Thyroid gland (tissue), 4 donors: ENCODE measurements at regions of chr3 and their contacts with region 1.

Region 1: DNA sequence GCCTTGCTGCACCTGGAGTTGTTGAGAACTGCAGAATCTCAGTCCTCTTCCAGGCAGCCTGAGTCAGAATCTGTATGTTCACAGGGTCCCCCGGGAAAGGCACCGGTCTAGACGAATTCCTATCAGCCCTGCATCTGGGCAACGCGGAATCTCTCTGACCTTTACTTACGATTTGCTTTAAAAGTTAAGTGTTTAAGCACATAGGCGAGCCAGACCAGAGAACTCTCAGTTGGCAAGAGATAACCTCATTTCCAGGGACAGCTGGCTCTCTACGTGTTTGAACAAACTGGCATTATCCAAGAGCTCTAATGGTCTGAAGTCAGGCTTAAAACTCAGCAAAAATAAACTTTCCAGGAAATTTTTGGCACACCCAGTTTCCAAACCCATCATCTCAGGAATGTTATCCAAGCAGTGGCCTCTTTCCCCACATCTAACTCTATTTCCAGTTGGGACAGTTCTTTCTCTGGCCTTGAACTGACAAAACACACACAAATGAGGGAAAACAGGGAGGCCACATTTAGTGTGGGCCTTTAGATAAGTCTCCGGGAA is 53.4 kb downstream of the HES1 start:
- DNase-seq: peak; percentile 56 to 61
- H3K4me3 ChIP-seq: no peak overlapping the region
- H3K27ac ChIP-seq: peak overlapping the region; percentile 68 to 74 (median 72)
- H3K4me1 ChIP-seq: peaks cover 35 to 69% of the 10 kb centered on the region in 2 donors
- H3K27me3 ChIP-seq: no peaks in the 10 kb centered on the region
- CTCF ChIP-seq: no peak
- POLR2A ChIP-seq: no peak

Region 2: GRCh38 chr3:194141415-194142155 is 47.7 kb before region 1 on chr3:
- intact Hi-C with region 1: loop called (anchors 10 kb)
- DNase-seq: peak; percentile 97 to 98
- H3K4me3 ChIP-seq: no peak overlapping the region
- H3K27ac ChIP-seq: peak overlapping the region; percentile 84 to 97 (median 94)
- H3K4me1 ChIP-seq: peaks cover 25 to 38% of the 10 kb centered on the region in 2 donors
- H3K27me3 ChIP-seq: no peaks in the 10 kb centered on the region
- CTCF ChIP-seq: peak in 1 of 6 experiments; percentile 29
- POLR2A ChIP-seq: peak in 1 of 2 donors; percentile 75

Region 3: GRCh38 chr3:194296454-194297263 is 107.3 kb after region 1 on chr3:
- intact Hi-C with region 1: loop called (anchors 5 kb)
- DNase-seq: peak; percentile 87 to 89
- H3K4me3 ChIP-seq: peak overlapping the region in 1 of 3 donors; percentile 12
- H3K27ac ChIP-seq: peak overlapping the region; percentile 81 to 97 (median 89)
- H3K4me1 ChIP-seq: peaks cover 26 to 52% of the 10 kb centered on the region in 2 donors
- H3K27me3 ChIP-seq: no peaks in the 10 kb centered on the region
- CTCF ChIP-seq: no peak
- POLR2A ChIP-seq: no peak